PC-9 (cell line): ENCODE measurements at regions of chr2 and their contacts with region 1.

Region 1: DNA sequence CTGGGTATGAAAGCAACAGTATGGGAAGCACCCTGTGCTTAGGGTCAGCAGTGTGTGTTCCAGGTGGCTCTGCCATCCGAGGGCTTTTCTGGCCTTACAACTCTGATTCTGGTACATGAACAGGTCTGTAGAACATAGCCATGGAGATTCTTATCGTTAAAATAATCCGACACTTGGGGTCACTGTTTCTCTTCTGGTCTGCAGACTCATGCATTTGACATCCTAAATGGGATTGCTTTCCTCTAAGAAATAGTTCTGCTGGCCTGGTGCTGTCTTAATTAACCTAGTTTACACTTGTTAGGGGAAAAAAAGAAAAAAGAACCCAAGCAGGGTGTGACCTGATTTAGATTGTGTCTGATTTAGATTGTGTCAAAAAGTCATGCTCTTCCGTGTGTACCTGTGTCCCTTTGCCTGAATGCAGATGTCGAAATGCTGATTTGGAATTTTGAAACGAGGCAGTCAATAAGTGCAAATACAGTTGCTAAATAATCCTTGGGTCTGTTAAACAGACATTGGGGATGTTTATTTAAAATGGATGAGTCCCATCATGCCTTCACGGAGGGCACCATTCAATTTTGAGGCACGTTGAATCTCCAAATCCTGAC is 59.6 kb downstream of the TRPM8 start:
- DNase-seq: peak; percentile 56 to 94
- H3K4me3 ChIP-seq: no peak overlapping the region
- H3K27ac ChIP-seq: peak overlapping the region; percentile 55
- H3K4me1 ChIP-seq: peaks cover 69% of the 10 kb centered on the region
- H3K27me3 ChIP-seq: no peaks in the 10 kb centered on the region
- CTCF ChIP-seq: peak; percentile 88

Region 2: GRCh38 chr2:233854241-233854981 is 122.4 kb before region 1 on chr2 and contains the start of gene HJURP:
- CTCF ChIA-PET with region 1: interaction called, 14 read pairs
- POLR2A ChIA-PET with region 1: interaction called, 5 read pairs
- intact Hi-C with region 1: loop called (anchors 2 kb)
- DNase-seq: peak; percentile 95 to 98
- H3K4me3 ChIP-seq: peak within 1 kb of the TSS; percentile 100
- H3K27ac ChIP-seq: peak within 1 kb of the TSS; percentile 21; the same call in 1 of the 2 replicates
- H3K4me1 ChIP-seq: peaks cover 32% of the 10 kb centered on the region
- H3K27me3 ChIP-seq: no peaks in the 10 kb centered on the region
- CTCF ChIP-seq: no peak
- total RNA-seq, gene HJURP: 109 TPM in 2 replicates

Region 3: DNA sequence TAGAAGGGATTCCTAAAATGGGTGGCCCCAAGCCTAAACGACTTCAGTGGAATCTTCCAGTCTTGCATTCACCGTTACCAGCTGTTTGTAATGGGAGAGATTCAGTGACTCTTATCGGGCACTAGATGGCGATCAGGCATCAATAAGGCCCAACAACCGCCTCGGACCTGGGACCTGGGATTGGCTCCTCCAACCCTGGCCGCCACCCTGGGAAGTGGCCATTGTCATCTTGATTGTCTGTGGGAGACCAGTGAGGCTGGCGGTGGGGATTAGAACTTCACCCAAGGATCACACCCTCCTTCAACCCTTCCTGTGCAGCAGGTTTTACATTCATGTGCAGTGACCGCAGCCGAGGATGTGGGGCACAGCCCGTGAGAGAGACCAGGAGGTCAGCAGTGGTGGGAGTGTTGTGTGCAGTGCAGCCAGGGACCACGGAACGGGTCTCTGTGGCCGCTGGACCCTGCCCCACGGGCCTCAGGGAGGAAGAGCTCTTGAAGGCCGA is 159.0 kb after region 1 on chr2:
- CTCF ChIA-PET with region 1: no interaction called
- POLR2A ChIA-PET with region 1: no interaction called
- intact Hi-C with region 1: loop called (anchors 1 kb)
- DNase-seq: peak; percentile 91 to 93
- H3K4me3 ChIP-seq: no peak overlapping the region
- H3K27ac ChIP-seq: peak overlapping the region; percentile 66
- H3K4me1 ChIP-seq: peaks cover 30% of the 10 kb centered on the region
- H3K27me3 ChIP-seq: no peaks in the 10 kb centered on the region
- CTCF ChIP-seq: peak; percentile 90

Region 4: DNA sequence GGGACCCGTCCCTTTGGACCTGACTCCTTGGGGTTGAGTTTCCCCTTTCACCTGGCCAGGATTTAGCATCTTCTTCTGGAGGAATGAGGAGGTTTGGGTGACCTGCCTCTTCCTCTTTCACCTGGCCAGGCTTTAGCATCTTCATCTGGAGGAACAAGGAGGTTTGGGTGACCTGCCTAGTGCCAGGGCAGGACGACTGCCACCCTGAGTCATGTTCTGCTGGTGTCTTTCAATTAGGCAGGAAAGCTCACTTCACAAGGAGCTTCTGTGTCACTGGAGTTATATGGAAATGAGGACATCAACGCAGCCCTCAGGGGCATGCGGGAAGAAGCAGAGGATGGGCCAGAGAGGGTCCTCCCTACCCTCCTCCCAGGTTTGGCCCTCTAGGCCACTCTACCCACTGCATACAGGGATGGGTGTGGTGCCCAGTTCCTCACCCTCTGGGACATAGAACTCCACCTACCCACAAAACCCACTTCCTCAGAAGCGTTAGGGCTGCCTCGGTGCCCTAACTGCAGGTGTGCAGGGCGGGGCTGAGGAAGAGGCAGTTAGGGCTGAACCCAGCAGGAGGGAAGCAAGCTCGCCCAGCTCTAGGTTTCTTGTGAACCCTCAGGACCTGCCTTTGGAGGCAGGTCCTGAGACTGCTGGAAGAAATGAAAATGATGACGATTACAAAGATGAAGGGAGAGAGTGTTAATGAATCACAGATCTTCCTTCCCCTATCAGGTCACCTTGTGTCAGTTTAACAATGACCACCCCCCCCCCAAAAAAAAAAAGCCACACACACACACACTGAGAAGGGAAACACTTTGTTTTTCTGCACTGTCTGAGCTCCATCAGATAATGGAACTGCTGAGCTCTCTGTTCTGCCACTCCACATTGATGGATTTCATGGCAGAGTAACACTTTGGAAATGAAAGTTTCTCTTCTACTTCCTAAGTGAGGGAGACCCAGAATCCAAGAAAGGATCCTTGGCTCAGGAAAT is 449.1 kb after region 1 on chr2:
- CTCF ChIA-PET with region 1: interaction called, 3 read pairs
- POLR2A ChIA-PET with region 1: no interaction called
- intact Hi-C with region 1: loop called (anchors 2 kb)
- DNase-seq: peak; percentile 83 to 85
- H3K4me3 ChIP-seq: no peak overlapping the region
- H3K27ac ChIP-seq: peak overlapping the region; percentile 44
- H3K4me1 ChIP-seq: peaks cover 68% of the 10 kb centered on the region
- H3K27me3 ChIP-seq: no peaks in the 10 kb centered on the region
- CTCF ChIP-seq: no peak

Region 5: DNA sequence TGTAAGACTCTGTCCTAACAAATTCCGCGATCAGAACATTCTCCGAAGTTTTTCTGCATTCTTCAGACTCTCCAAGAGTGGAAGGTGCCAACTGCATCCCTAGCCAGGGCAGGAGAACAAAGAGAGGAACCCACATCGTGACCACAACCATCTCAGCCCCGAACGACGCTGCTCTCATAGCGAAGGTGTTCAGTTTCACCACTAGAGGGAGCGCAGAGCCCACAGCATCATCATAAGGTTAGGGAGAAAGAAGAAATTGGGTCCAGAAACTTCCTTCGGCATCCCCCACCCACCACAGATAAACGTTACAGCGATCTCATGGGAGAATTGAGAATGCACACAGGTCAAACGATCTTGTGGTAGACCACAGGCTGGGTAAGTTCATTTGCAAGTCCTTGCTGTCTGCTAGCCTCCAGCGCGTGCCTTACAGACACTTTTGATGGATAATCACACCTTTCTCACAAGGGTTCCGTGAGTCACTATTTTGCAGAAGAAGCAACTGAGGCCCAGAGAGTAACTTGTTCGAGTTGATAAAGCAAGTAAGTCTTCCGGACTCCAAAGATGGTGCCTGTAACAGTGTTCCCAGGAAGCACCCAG is 573.8 kb after region 1 on chr2:
- CTCF ChIA-PET with region 1: interaction called, 3 read pairs
- POLR2A ChIA-PET with region 1: interaction called, 4 read pairs
- intact Hi-C with region 1: loop called (anchors 1 kb)
- DNase-seq: peak; percentile 74 to 85
- H3K4me3 ChIP-seq: no peak overlapping the region
- H3K27ac ChIP-seq: no peak overlapping the region
- H3K4me1 ChIP-seq: peaks cover 11% of the 10 kb centered on the region
- H3K27me3 ChIP-seq: no peaks in the 10 kb centered on the region
- CTCF ChIP-seq: peak; percentile 99

Region 6: DNA sequence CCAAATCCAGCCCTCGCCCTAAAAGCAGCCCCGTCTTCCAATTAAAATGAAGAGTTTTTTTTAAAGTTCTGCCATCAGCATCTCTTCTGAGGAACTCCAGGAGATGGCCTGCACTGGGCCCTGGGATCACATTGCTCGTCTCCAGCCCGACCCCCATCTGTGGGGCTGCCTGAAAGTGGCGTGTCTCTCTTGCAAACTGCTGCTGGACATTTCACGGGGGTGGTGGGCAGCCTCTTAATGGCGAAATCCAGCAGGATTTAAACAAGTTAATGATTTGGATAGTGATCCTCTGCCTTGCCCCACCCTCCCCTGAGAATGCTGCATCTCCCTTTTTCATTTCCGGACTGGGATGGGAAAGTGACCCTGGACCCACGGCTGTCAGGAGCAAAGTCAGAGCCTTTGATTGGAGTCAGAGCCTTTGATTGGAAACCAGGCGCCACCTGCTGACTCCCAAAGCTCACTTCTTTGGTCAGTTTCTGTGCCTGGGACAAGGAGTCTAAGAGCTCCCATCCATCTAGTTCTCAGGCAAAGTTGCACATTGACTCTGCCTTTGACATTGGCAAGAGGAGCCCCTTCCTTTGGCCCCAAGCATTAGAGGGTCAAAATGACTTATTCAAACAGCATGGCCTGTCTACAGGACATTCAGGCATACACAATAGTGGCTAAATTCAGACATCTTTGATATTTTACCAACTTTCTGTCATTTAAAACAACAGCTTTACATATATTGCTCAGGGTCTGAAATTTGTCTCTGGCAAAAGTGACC is 1130.3 kb after region 1 on chr2:
- CTCF ChIA-PET with region 1: interaction called, 3 read pairs
- POLR2A ChIA-PET with region 1: no interaction called
- intact Hi-C with region 1: loop called (anchors 2 kb)
- DNase-seq: peak; percentile 72 to 78
- H3K4me3 ChIP-seq: no peak overlapping the region
- H3K27ac ChIP-seq: no peak overlapping the region
- H3K4me1 ChIP-seq: peaks cover 9% of the 10 kb centered on the region; the same call in 1 of the 2 replicates
- H3K27me3 ChIP-seq: no peaks in the 10 kb centered on the region
- CTCF ChIP-seq: peak; percentile 91